Naive thymus-derived CD4-positive, alpha-beta T cell (primary cell): ENCODE measurements at regions of chr19 and their contacts with region 1.

Region 1: GRCh38 chr19:58439576-58440554 is at the start of gene ZNF132:
- DNase-seq: peak; percentile 78 to 99 (median 95)
- ATAC-seq: peak; percentile 98
- H3K4me3 ChIP-seq: peak within 1 kb of the TSS; percentile 73
- H3K4me3 Mint-ChIP-seq: peak within 1 kb of the TSS; percentile 86 to 99 (median 96)
- H3K27ac ChIP-seq: peak within 1 kb of the TSS; percentile 81
- H3K27ac Mint-ChIP-seq: peak within 1 kb of the TSS; percentile 87 to 99 (median 97)
- H3K4me1 ChIP-seq: peaks cover 17% of the 10 kb centered on the region in 2 donors
- H3K4me1 Mint-ChIP-seq: peaks cover 21 to 35% (median 27%) of the 10 kb centered on the region in 7 donors
- H3K27me3 ChIP-seq: no peaks in the 10 kb centered on the region
- H3K27me3 Mint-ChIP-seq: no peaks in the 10 kb centered on the region
- total RNA-seq, gene ZNF132: 1.2 to 12.9 (median 4.9) TPM

Region 2: GRCh38 chr19:57682226-57682766 is 757.6 kb before region 1 on chr19:
- CTCF ChIA-PET with region 1: no interaction called
- POLR2A ChIA-PET with region 1: no interaction called
- intact Hi-C with region 1: loop called in 1 of 2 experiments (anchors 5 kb)
- DNase-seq: no peak
- ATAC-seq: no peak
- H3K4me3 ChIP-seq: peak overlapping the region; percentile 93
- H3K4me3 Mint-ChIP-seq: peak overlapping the region; percentile 89 to 99 (median 97)
- H3K27ac ChIP-seq: peak overlapping the region; percentile 80
- H3K27ac Mint-ChIP-seq: peak overlapping the region; percentile 90 to 98 (median 96)
- H3K4me1 ChIP-seq: peaks cover 9 to 13% of the 10 kb centered on the region in 2 donors
- H3K4me1 Mint-ChIP-seq: peaks cover 25 to 46% (median 39%) of the 10 kb centered on the region in 7 donors
- H3K27me3 ChIP-seq: no peaks in the 10 kb centered on the region
- H3K27me3 Mint-ChIP-seq: peaks cover 2 to 8% (median 7%) of the 10 kb centered on the region in 5 donors

Region 3: DNA sequence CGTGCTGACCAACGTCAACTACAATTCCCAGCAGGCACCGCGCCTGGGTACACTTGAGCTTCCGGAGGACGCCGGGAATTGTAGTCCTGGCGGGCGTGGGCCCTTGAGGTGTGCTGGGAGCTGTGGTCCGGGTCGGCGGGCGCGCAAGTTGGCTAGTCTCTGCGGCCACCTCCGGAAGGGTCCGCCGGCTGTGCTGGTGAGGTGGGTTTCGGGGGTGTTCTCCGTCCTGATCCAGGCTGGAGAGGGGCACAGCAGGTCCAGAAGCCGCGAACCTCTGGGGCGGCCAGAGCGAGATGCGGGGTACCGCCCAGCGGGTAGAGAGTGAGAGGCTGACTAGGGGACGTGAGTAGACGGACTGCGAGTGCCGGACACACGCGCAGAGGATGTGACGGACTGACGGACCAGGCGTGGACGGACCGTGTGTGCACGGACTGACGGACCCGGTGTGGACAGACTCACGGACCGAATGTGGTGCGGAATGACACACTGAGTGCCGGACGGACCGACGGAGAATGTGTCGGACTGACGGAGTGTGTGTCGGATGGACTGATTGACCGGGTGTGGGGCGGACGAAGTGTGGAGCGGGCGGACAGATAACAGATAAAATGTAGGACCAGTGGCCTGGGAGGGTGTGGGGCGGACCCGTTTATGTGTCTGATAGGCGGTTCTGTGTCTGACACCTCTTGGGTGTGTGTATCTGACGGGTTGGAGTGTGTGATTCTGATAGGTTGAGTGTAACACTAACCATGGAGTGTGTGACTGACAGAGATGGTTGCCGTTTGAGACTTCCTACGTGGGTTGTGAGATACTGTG is 112.7 kb before region 1 on chr19 and contains the start of gene ZSCAN22:
- CTCF ChIA-PET with region 1: no interaction called
- POLR2A ChIA-PET with region 1: no interaction called
- intact Hi-C with region 1: loop called (anchors 1 kb)
- DNase-seq: peak; percentile 65 to 89 (median 78)
- ATAC-seq: peak; percentile 90
- H3K4me3 ChIP-seq: peak within 1 kb of the TSS; percentile 95
- H3K4me3 Mint-ChIP-seq: no peak within 1 kb of the TSS
- H3K27ac ChIP-seq: peak within 1 kb of the TSS; percentile 72
- H3K27ac Mint-ChIP-seq: no peak within 1 kb of the TSS
- H3K4me1 ChIP-seq: peaks cover 14 to 16% of the 10 kb centered on the region in 2 donors
- H3K4me1 Mint-ChIP-seq: peaks cover 0 to 10% (median 6%) of the 10 kb centered on the region in 7 donors
- H3K27me3 ChIP-seq: no peaks in the 10 kb centered on the region
- H3K27me3 Mint-ChIP-seq: no peaks in the 10 kb centered on the region
- total RNA-seq, gene ZSCAN22: 1.1 to 6.0 (median 4.5) TPM

Region 4: DNA sequence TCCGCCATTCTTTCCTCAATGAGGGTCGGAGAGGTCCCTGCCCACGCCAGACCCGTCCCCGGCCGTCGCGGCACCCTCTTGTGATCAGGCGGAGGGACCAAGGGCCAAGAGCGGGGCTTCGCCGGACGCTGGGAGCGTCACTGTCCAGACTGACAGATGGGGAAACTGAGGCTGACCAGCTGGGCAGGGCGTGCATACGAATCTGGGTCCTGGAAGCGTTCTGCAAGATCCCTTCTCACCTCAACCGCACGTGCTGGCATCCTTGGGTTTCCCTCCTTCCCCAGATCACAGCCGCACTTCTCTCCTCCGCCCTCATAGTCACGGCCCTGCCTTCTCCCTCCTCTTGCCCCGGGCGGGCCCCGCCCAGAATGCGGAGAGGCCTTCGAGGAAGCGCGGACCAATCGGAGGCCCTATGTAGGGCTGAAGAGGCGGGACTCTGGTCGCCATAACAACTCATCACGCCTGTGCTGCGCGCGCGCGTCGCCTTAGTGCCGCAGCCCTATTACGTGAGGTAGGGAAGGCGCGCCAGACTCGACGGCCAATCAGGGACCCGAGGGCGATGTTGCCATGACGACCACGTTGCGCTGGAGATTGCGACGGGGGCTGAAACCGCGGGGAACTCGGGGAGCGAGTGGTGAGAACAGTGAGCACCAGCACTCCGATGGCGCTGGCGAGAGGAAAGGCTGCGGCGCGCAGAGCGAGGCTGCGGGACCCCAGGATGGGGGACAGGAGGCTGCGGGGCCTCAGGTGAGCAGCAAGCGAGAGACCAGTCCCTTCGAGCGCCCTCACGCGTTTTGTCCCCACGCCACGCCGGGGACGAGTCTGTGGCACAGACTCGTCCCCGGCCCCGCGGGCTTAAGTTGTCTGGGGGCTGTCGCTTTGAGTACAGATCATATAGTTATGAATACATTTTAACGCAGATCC is 38.7 kb before region 1 on chr19:
- CTCF ChIA-PET with region 1: no interaction called
- POLR2A ChIA-PET with region 1: no interaction called
- intact Hi-C with region 1: loop called (anchors 1 kb)
- DNase-seq: peak; percentile 96 to 100 (median 98)
- ATAC-seq: peak; percentile 97
- H3K4me3 ChIP-seq: peak overlapping the region; percentile 77
- H3K4me3 Mint-ChIP-seq: peak overlapping the region; percentile 86 to 98 (median 94)
- H3K27ac ChIP-seq: peak overlapping the region; percentile 91
- H3K27ac Mint-ChIP-seq: peak overlapping the region; percentile 88 to 97 (median 94)
- H3K4me1 ChIP-seq: peaks cover 6 to 13% of the 10 kb centered on the region in 2 donors
- H3K4me1 Mint-ChIP-seq: peaks cover 6 to 19% (median 8%) of the 10 kb centered on the region in 7 donors
- H3K27me3 ChIP-seq: peaks cover 0 to 3% of the 10 kb centered on the region in 2 donors
- H3K27me3 Mint-ChIP-seq: peaks cover 5 to 20% (median 7%) of the 10 kb centered on the region in 5 donors

Region 5: DNA sequence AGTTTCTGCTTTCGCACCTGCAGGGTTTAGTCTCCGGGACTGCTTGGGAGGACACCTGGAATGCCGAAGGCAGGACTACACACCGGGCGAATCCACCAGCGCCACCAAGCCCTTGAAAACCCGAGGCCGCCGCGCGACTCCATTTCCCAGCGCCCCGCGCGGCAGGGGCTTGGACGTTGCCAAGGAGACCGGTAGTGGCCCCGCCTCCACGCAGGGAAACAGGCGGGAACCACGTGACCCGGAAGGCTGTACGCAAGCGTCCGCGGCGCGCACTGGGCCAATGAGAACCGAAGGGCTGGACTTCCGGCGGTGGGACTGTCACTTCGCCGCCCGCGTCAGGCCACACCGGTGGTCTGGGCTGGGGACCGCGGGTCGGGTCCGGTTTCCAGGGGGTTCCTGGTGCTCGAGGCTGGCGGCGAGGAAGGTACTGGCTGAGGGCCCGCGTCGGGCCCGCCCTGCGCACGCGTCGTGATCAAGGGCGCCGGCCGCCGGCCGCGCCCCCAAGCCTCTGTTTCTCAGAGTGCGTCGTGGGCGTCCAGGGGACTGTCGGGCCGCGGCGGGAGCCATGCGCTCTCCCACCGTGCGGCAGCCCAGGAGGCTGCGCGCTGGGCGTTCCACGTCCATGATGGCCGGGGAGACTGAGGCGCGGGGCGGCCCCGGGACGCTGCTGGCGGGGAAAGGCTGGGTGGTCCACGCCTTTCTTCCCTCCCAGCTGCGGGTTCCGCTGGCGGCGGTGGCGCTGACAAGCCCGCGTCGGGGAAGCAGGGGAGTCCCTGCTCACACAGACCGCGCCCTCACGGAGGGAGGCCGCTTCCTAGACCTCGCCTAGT is 27.1 kb after region 1 on chr19 and contains the start of gene ZNF324:
- CTCF ChIA-PET with region 1: no interaction called
- POLR2A ChIA-PET with region 1: no interaction called
- intact Hi-C with region 1: loop called (anchors 1 kb)
- DNase-seq: peak; percentile 92 to 97 (median 95)
- ATAC-seq: peak; percentile 98
- H3K4me3 ChIP-seq: peak within 1 kb of the TSS; percentile 92
- H3K4me3 Mint-ChIP-seq: peak within 1 kb of the TSS; percentile 80 to 89 (median 86)
- H3K27ac ChIP-seq: peak within 1 kb of the TSS; percentile 99
- H3K27ac Mint-ChIP-seq: peak within 1 kb of the TSS in 8 of 9 donors; percentile 67 to 91 (median 85)
- H3K4me1 ChIP-seq: peaks cover 7 to 11% of the 10 kb centered on the region in 2 donors
- H3K4me1 Mint-ChIP-seq: peaks cover 14 to 27% (median 22%) of the 10 kb centered on the region in 7 donors
- H3K27me3 ChIP-seq: no peaks in the 10 kb centered on the region
- H3K27me3 Mint-ChIP-seq: peaks cover 0 to 3% (median 0%) of the 10 kb centered on the region in 5 donors
- total RNA-seq, gene ZNF324: 14.2 to 28.0 (median 23.4) TPM

Region 6: GRCh38 chr19:58492265-58492664 is 52.4 kb after region 1 on chr19:
- CTCF ChIA-PET with region 1: no interaction called
- POLR2A ChIA-PET with region 1: no interaction called
- intact Hi-C with region 1: no loop called
- DNase-seq: no peak
- ATAC-seq: no peak
- H3K4me3 ChIP-seq: no peak overlapping the region
- H3K4me3 Mint-ChIP-seq: no peak overlapping the region
- H3K27ac ChIP-seq: no peak overlapping the region
- H3K27ac Mint-ChIP-seq: no peak overlapping the region
- H3K4me1 ChIP-seq: no peaks in the 10 kb centered on the region
- H3K4me1 Mint-ChIP-seq: peaks cover 0 to 17% (median 0%) of the 10 kb centered on the region in 7 donors
- H3K27me3 ChIP-seq: no peaks in the 10 kb centered on the region
- H3K27me3 Mint-ChIP-seq: no peaks in the 10 kb centered on the region

Region 7: GRCh38 chr19:58513694-58514563 is 74.1 kb after region 1 on chr19:
- CTCF ChIA-PET with region 1: no interaction called
- POLR2A ChIA-PET with region 1: no interaction called
- intact Hi-C with region 1: loop called in 1 of 2 experiments (anchors 1 kb)
- DNase-seq: peak; percentile 91 to 99 (median 95)
- ATAC-seq: peak; percentile 98
- H3K4me3 ChIP-seq: peak overlapping the region; percentile 39
- H3K4me3 Mint-ChIP-seq: peak overlapping the region; percentile 73 to 93 (median 84)
- H3K27ac ChIP-seq: peak overlapping the region; percentile 65
- H3K27ac Mint-ChIP-seq: peak overlapping the region; percentile 67 to 94 (median 85)
- H3K4me1 ChIP-seq: peaks cover 17 to 21% of the 10 kb centered on the region in 2 donors
- H3K4me1 Mint-ChIP-seq: peaks cover 17 to 40% (median 27%) of the 10 kb centered on the region in 7 donors
- H3K27me3 ChIP-seq: no peaks in the 10 kb centered on the region
- H3K27me3 Mint-ChIP-seq: no peaks in the 10 kb centered on the region